PC-9 (cell line): ENCODE measurements at regions of chr7 and their contacts with region 1.

Region 1: DNA sequence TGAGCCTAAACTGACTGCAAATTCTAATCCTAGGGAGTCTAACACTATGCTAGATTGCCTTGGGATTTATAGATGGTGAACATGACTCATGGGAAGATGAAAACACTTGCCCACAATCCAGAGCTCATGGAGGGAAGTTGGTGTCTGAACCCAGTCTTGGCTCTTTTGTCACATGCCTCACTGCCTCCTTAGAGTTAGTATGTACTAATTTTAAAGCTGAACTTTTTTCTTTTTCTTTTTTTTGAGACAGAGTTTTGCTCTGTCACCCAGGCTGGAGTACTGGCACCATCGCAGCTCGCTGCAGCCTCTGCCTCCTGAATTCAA is 14.4 kb downstream of the MRPL32 start:
- DNase-seq: no peak
- H3K4me3 ChIP-seq: no peak overlapping the region
- H3K27ac ChIP-seq: no peak overlapping the region
- H3K4me1 ChIP-seq: no peaks in the 10 kb centered on the region
- H3K27me3 ChIP-seq: 0 out of 2 replicates have a peak, but pooled peaks cover 5% of the 10 kb centered on the region
- CTCF ChIP-seq: no peak

Region 2: GRCh38 chr7:43112941-43113621 is 166.5 kb after region 1 on chr7:
- CTCF ChIA-PET with region 1: interaction called, 12 read pairs
- POLR2A ChIA-PET with region 1: no interaction called
- intact Hi-C with region 1: no loop called
- DNase-seq: no peak
- H3K4me3 ChIP-seq: no peak overlapping the region
- H3K27ac ChIP-seq: no peak overlapping the region
- H3K4me1 ChIP-seq: no peaks in the 10 kb centered on the region
- H3K27me3 ChIP-seq: peaks cover 75% of the 10 kb centered on the region
- CTCF ChIP-seq: no peak